Astrocyte of the cerebellum (primary cell): ENCODE measurements at regions of chr7 and their contacts with region 1.

Region 1: GRCh38 chr7:108135446-108136190 is 5.5 kb upstream of the LAMB4 start:
- DNase-seq: no peak
- H3K4me3 ChIP-seq: no peak overlapping the region
- CTCF ChIP-seq: no peak

Region 2: GRCh38 chr7:108094933-108095710 is 40.5 kb before region 1 on chr7:
- in situ Hi-C with region 1: loop called (anchors 5 kb)
- DNase-seq: peak; percentile 93
- H3K4me3 ChIP-seq: peak overlapping the region; percentile 4
- CTCF ChIP-seq: no peak

Region 3: DNA sequence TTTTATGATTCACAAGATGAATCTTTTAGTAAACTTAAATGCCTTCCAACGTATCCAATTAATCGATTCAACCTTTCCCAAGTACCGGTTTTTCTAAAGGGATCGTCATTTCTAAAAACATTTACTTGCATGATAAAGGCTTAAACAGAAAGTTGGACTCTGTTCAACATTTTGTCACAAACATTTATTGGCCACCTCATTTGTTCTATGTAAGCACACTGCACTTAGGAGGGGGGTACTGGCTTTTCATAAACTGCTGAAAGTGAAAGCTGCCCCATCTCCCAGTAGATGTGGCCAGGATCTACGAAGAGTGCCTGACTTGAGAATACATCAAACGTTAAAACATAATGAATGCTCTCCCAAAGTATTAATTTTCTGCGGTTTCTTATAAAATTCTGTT is 31.8 kb after region 1 on chr7:
- in situ Hi-C with region 1: no loop called
- DNase-seq: peak; percentile 20
- H3K4me3 ChIP-seq: no peak overlapping the region
- CTCF ChIP-seq: no peak